Endothelial cell of umbilical vein (primary cell): ENCODE measurements at regions of chrX and their contacts with region 1.

Region 1: GRCh38 chrX:130097507-130098209 is 12.6 kb downstream of the ELF4 start:
- DNase-seq: peak; percentile 87
- H3K4me3 ChIP-seq: no peak overlapping the region
- H3K27ac ChIP-seq: peak overlapping the region; percentile 66
- H3K4me1 ChIP-seq: peaks cover 19% of the 10 kb centered on the region
- H3K27me3 ChIP-seq: no peaks in the 10 kb centered on the region
- CTCF ChIP-seq: no peak
- POLR2A ChIP-seq: no peak

Region 2: GRCh38 chrX:129654419-129655165 is 443.1 kb before region 1 on chrX and contains the start of gene APLN:
- CTCF ChIA-PET with region 1: no interaction called
- POLR2A ChIA-PET with region 1: no interaction called
- dilution Hi-C with region 1: no loop called
- intact Hi-C with region 1: no loop called
- DNase-seq: peak; percentile 55
- H3K4me3 ChIP-seq: peak within 1 kb of the TSS; percentile 58 to 78 (median 67)
- H3K27ac ChIP-seq: peak within 1 kb of the TSS; percentile 69
- H3K4me1 ChIP-seq: peaks cover 42% of the 10 kb centered on the region
- H3K27me3 ChIP-seq: no peaks in the 10 kb centered on the region
- CTCF ChIP-seq: no peak
- POLR2A ChIP-seq: peak; percentile 92
- total RNA-seq, gene APLN: 465 and 466 TPM in 2 replicates

Region 3: GRCh38 chrX:130086447-130087206 is 11.0 kb before region 1 on chrX:
- CTCF ChIA-PET with region 1: interaction called, 7 read pairs
- POLR2A ChIA-PET with region 1: interaction called, 4 read pairs
- dilution Hi-C with region 1: no loop called
- intact Hi-C with region 1: loop called (anchors 1 kb)
- DNase-seq: no peak
- H3K4me3 ChIP-seq: no peak overlapping the region
- H3K27ac ChIP-seq: peak overlapping the region; percentile 94
- H3K4me1 ChIP-seq: peaks cover 44% of the 10 kb centered on the region
- H3K27me3 ChIP-seq: no peaks in the 10 kb centered on the region
- CTCF ChIP-seq: no peak
- POLR2A ChIP-seq: no peak

Region 4: GRCh38 chrX:130139474-130140201 is 42.0 kb after region 1 on chrX:
- CTCF ChIA-PET with region 1: no interaction called
- POLR2A ChIA-PET with region 1: no interaction called
- dilution Hi-C with region 1: no loop called
- intact Hi-C with region 1: no loop called
- DNase-seq: peak; percentile 29
- H3K4me3 ChIP-seq: no peak overlapping the region
- H3K27ac ChIP-seq: no peak overlapping the region
- H3K4me1 ChIP-seq: peaks cover 4% of the 10 kb centered on the region
- H3K27me3 ChIP-seq: no peaks in the 10 kb centered on the region
- CTCF ChIP-seq: no peak
- POLR2A ChIP-seq: no peak